ENCODE measurements at regions of chr18 and their contacts with region 1.

Region 1: DNA sequence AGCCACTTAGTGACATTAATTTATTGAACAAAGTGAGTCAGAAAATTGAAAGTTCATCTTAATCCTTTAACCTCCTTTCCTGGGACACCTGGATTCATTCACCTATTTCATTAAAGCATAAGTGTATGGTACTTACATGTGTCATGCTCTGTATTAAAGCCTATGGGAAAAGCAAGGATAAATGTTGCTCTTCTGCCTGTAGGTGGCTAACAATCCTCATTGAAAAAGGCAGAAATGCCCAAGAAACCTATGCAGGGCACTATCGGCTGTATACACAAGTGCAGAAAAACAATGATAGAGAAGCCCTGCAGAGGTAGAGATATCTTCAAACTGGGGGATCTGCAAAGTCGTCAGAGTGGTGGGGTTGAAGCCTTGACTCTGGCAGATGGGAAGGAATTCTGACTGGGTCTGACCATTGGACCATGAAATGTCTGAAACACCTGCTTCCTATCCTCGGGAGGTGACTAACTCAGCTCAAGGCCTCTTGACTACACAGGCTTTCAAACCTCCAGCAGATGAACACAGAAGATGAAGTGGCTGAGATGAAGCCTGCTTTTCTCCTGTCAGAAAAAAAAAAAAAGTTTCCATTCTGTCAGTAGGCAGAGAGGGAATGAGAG is 83.1 kb downstream of the DCC start:
- DNase-seq: peak; percentile 83
- H3K4me3 ChIP-seq: no peak overlapping the region
- H3K27ac ChIP-seq: peak overlapping the region; percentile 99
- H3K4me1 ChIP-seq: peaks cover 90% of the 10 kb centered on the region
- H3K27me3 ChIP-seq: no peaks in the 10 kb centered on the region
- CTCF ChIP-seq: peak; percentile 58

Region 2: GRCh38 chr18:52387175-52387574 is 35.9 kb before region 1 on chr18:
- CTCF ChIA-PET with region 1: interaction called, 6 read pairs
- POLR2A ChIA-PET with region 1: interaction called, 4 read pairs
- intact Hi-C with region 1: loop called (anchors 1 kb)
- DNase-seq: peak; percentile 93
- H3K4me3 ChIP-seq: no peak overlapping the region
- H3K27ac ChIP-seq: peak overlapping the region; percentile 98
- H3K4me1 ChIP-seq: peaks cover 95% of the 10 kb centered on the region
- H3K27me3 ChIP-seq: no peaks in the 10 kb centered on the region
- CTCF ChIP-seq: no peak

Region 3: GRCh38 chr18:52531836-52532235 is 108.7 kb after region 1 on chr18:
- CTCF ChIA-PET with region 1: no interaction called
- POLR2A ChIA-PET with region 1: no interaction called
- intact Hi-C with region 1: no loop called
- DNase-seq: no peak
- H3K4me3 ChIP-seq: no peak overlapping the region
- H3K27ac ChIP-seq: no peak overlapping the region
- H3K4me1 ChIP-seq: peaks cover 24% of the 10 kb centered on the region
- H3K27me3 ChIP-seq: no peaks in the 10 kb centered on the region
- CTCF ChIP-seq: no peak

Region 4: DNA sequence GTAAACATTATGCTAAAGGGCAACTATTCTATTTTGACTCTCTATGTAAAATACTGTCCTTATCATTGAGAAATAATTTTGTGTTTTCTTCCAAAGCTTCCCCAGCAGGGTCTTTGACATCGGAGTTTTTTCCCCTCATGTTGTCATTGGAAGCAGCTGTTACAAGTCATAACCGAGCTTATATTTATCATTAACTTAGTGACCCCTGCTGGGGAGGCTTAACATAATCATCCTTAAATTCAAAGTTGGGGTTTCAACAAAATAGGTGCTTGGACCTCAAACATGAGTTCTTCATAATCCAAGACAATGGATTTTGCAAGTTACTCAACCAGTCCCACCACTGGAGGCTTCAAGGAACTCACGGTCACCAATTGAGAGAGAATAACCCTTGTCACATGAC is 247.8 kb after region 1 on chr18:
- CTCF ChIA-PET with region 1: interaction called, 13 read pairs
- POLR2A ChIA-PET with region 1: no interaction called
- intact Hi-C with region 1: loop called (anchors 5 kb)
- DNase-seq: peak; percentile 73
- H3K4me3 ChIP-seq: no peak overlapping the region
- H3K27ac ChIP-seq: no peak overlapping the region
- H3K4me1 ChIP-seq: peaks cover 61% of the 10 kb centered on the region
- H3K27me3 ChIP-seq: no peaks in the 10 kb centered on the region
- CTCF ChIP-seq: peak; percentile 55

Region 5: DNA sequence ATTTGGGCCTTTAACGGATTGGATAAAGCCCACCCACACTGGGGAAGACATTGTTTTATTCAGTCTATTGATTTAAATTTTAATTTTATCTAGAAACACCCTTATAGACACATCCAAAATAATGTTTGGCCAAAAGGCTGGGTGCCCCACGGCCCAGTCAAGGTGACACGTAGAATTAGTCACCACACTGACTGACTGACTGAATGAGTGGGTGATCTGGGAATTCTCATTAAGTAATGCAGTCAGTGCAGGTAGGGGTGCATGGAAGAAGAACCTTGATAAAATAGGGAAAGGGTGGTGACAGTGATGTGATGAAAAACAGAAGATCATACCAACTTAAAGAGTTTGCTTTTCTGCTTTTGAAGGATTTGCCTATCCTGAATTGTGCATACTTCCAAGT is 471.7 kb after region 1 on chr18:
- CTCF ChIA-PET with region 1: no interaction called
- POLR2A ChIA-PET with region 1: no interaction called
- intact Hi-C with region 1: loop called (anchors 5 kb)
- DNase-seq: no peak
- H3K4me3 ChIP-seq: no peak overlapping the region
- H3K27ac ChIP-seq: no peak overlapping the region
- H3K4me1 ChIP-seq: peaks cover 65% of the 10 kb centered on the region
- H3K27me3 ChIP-seq: no peaks in the 10 kb centered on the region
- CTCF ChIP-seq: no peak

Region 6: DNA sequence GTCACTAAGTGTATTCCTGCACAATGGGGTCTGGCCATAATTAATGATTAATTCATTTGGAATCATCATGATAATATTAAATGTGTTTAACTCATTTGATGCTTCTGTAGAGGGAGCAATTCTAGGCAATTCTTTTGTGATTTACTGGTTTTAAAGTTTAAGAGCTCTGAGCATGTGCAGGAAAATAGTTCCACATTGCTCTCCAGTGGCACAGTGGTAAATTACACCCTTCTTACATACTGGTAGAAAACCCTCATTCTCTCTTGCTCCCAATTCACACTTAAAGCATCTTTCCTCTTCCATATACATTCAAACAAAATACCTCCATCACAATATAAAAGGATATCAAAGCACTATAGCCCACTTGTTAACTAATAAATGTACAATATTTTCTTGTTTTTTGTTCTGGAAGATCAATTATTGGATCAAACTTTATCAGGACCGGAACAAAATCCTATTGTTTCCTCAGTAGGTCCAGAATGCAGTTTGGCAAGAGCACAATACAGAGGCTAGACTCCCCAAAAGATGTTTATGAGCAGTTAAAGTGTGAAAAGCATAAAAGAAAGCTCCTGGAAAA is 957.1 kb after region 1 on chr18:
- CTCF ChIA-PET with region 1: no interaction called
- POLR2A ChIA-PET with region 1: no interaction called
- intact Hi-C with region 1: loop called (anchors 10 kb)
- DNase-seq: peak; percentile 77
- H3K4me3 ChIP-seq: no peak overlapping the region
- H3K27ac ChIP-seq: no peak overlapping the region
- H3K4me1 ChIP-seq: peaks cover 7% of the 10 kb centered on the region
- H3K27me3 ChIP-seq: no peaks in the 10 kb centered on the region
- CTCF ChIP-seq: peak; percentile 77